Mammary epithelial cell (primary cell): ENCODE measurements at regions of chr18 and their contacts with region 1.

Region 1: GRCh38 chr18:75478996-75479880 is 51.7 kb upstream of the SMIM21 start:
- DNase-seq: peak; percentile 40
- H3K4me3 ChIP-seq: no peak overlapping the region
- H3K27ac ChIP-seq: no peak overlapping the region
- H3K4me1 ChIP-seq: peaks cover 5% of the 10 kb centered on the region
- H3K27me3 ChIP-seq: no peaks in the 10 kb centered on the region
- CTCF ChIP-seq: peak; percentile 47 to 65

Region 2: DNA sequence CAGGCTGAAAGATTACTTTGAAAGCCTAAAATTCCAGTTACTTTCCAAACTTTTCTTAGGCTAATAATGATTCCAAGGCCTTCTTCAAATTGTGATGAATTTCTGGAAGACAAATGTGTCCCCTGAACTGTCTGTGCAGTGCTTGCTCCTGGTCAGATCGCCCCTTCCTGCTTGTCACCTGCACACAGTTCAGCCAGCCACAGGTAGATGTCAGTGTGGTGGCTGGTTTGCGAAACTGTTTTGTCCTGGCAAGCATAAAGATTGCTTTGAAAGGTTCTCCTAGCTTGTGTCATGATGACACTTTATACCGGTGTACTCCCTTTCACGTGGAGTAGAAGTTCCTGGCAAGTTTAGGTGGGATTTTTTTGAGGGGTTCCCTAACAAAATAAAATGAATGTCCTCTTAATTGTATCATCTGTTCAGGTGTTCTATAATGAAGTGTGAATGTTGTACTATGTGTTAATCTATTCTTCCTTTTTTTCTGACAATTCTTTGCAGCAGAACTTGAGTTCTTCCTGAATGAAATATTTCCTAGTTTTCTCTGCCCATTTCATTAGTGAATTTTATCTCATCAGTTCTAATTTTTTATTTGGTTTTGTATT is 582.7 kb before region 1 on chr18:
- CTCF ChIA-PET with region 1: no interaction called
- dilution Hi-C with region 1: no loop called
- in situ Hi-C with region 1: no loop called
- intact Hi-C with region 1: loop called (anchors 1 kb)
- DNase-seq: peak; percentile 62
- H3K4me3 ChIP-seq: no peak overlapping the region
- H3K27ac ChIP-seq: no peak overlapping the region
- H3K4me1 ChIP-seq: peaks cover 6% of the 10 kb centered on the region
- H3K27me3 ChIP-seq: no peaks in the 10 kb centered on the region
- CTCF ChIP-seq: peak; percentile 83 to 89

Region 3: DNA sequence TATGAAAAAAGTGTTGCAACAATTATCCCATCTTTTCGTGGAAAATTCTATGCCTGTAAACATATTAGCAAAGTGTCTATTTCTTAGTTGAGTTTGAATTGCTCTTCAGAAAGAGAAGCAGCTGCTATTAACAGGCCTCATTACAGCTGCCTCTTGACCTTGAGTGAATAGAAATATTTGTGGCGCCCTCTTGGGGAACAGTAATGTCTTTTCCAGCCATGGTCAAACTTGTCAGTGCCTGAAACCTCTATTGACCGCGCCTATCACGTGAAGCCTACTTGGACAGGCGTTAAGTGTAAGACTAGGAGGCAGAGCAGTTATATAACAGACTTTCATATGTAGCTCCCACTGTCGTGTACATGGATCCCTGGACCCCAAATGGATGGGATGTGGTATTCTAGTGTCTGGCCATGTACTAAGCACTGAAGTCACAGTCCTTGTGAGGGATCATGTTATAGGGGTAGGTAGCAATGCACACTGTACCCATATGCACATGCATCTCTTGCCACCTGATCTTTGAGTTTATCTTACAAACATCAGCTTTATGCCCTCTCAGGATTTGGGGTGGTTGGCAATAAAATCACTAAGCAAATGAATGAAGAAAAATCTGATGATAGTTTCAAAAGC is 515.3 kb before region 1 on chr18:
- CTCF ChIA-PET with region 1: no interaction called
- dilution Hi-C with region 1: no loop called
- in situ Hi-C with region 1: no loop called
- intact Hi-C with region 1: loop called (anchors 5 kb)
- DNase-seq: peak; percentile 31
- H3K4me3 ChIP-seq: no peak overlapping the region
- H3K27ac ChIP-seq: no peak overlapping the region
- H3K4me1 ChIP-seq: no peaks in the 10 kb centered on the region
- H3K27me3 ChIP-seq: no peaks in the 10 kb centered on the region
- CTCF ChIP-seq: peak; percentile 16 to 54

Region 4: DNA sequence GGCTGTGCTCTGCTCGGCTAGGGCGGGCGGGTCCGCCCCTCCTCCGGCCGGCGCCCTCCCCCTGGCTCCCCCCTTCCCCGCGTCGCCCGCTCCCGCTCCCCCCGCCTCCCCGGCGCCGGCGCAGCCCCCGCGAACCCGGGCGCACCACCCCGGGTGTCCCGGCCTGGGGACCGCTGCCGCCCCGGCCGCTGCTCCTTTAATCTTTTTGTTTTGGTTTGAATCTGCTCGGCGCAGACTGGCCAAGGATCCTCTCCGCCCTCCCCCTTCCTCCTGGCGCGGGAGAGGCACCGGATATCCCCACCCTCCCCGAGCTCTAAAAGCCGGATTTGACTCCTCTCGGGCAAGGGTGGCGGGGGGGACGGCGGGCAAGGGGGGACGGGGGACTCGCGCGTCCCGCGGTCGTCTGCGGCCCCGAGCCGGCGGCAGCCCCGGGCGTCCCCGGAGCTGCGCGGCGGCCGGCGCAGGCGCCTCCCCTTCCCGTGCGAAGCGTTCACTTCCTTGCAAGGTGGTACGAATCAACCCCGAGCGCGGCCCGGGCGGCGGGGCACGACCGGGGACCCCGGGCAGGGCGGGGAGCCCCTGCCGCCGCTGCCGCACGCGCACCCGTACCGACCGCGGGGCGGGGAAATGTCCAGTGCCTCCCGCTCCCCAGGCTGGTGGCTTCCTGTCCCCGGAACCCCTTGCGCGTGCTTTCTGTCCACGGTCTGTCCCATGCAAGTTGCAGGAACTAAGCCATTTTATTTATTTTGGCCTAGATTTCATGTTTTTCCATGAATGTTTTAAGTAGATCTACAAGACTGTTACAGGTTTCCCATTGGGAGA is 269.9 kb before region 1 on chr18 and contains the start of gene PTGR3:
- CTCF ChIA-PET with region 1: interaction called, 18 read pairs
- dilution Hi-C with region 1: no loop called
- in situ Hi-C with region 1: loop called in 1 of 2 experiments (anchors 25 kb)
- intact Hi-C with region 1: loop called (anchors 2 kb)
- DNase-seq: peak; percentile 81
- H3K4me3 ChIP-seq: peak within 1 kb of the TSS; percentile 79 to 98 (median 88)
- H3K27ac ChIP-seq: peak within 1 kb of the TSS; percentile 74
- H3K4me1 ChIP-seq: peaks cover 36% of the 10 kb centered on the region
- H3K27me3 ChIP-seq: no peaks in the 10 kb centered on the region
- CTCF ChIP-seq: no peak
- total RNA-seq, gene PTGR3: 15.2 to 29.4 TPM

Region 5: DNA sequence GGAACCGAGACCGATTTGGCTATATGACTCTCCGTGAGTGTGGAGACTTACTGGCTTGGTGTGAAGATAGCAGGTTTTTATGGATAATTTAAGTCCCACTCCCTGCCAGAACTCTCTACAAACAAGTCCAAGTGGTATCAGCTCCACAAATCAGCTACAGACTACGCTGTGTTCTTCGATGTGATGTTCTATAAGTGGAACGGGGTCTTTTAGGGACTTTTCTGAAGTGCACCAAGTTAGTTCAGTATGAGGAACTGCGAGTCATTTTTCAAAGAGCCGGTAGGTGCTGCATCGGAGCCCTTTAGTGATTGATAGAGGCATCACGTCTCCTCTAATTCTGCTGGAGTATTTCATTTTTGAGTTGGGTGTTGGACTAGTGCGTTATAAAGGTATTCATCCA is 161.5 kb before region 1 on chr18:
- CTCF ChIA-PET with region 1: no interaction called
- dilution Hi-C with region 1: no loop called
- in situ Hi-C with region 1: no loop called
- intact Hi-C with region 1: loop called (anchors 5 kb)
- DNase-seq: no peak
- H3K4me3 ChIP-seq: no peak overlapping the region
- H3K27ac ChIP-seq: no peak overlapping the region
- H3K4me1 ChIP-seq: no peaks in the 10 kb centered on the region
- H3K27me3 ChIP-seq: peaks cover 2% of the 10 kb centered on the region
- CTCF ChIP-seq: no peak

Region 6: GRCh38 chr18:75376004-75376403 is 103.2 kb before region 1 on chr18:
- CTCF ChIA-PET with region 1: no interaction called
- dilution Hi-C with region 1: loop called (anchors 5 kb)
- in situ Hi-C with region 1: no loop called
- intact Hi-C with region 1: no loop called
- DNase-seq: no peak
- H3K4me3 ChIP-seq: no peak overlapping the region
- H3K27ac ChIP-seq: no peak overlapping the region
- H3K4me1 ChIP-seq: no peaks in the 10 kb centered on the region
- H3K27me3 ChIP-seq: peaks cover 1% of the 10 kb centered on the region
- CTCF ChIP-seq: no peak

Region 7: DNA sequence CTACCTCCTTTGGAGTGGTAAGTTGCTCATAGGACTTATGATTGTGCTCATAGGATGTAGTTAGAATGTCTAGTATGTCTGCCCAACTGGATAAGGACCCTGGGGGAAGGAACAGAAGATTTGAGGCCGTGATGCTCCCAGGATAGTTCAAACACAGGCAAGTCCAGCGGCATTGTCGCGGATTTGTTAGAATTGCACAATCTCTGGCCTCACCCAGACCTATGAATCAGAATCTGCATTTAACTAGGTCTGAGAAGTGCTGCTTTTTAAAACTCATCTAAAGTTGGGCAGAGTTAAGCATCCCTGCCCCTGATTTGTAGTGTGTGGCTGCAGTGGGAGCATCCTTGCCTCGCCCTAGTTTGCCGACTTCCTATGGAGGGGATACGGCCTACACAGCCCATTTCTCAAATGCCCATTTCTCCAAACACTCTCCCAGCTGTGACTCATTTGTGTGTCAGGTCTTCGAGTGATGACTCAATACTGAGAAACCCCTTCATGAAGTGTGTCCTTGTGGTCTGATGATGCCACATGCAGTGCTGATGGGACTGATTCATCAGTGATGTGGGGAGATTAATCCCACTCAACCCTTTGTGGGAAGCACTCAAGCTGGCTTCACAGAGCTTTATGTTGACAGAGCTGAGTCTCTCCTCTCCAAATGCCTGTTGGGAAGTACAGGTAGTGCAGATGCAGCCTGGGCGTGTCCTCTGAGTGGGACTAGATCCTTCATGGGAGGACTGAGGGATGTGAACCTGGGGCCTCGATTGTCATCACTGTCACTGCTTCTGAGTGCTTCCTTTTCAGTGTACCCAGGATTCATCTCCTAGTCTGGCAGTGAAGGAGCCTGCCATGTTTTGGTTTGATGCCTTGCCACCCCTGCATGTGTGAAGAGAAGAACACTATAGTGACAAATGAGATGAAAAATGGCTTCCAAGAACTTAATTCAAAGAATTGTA is 70.4 kb before region 1 on chr18:
- CTCF ChIA-PET with region 1: no interaction called
- dilution Hi-C with region 1: no loop called
- in situ Hi-C with region 1: no loop called
- intact Hi-C with region 1: loop called (anchors 5 kb)
- DNase-seq: peak; percentile 100
- H3K4me3 ChIP-seq: no peak overlapping the region
- H3K27ac ChIP-seq: peak overlapping the region; percentile 76
- H3K4me1 ChIP-seq: peaks cover 29% of the 10 kb centered on the region
- H3K27me3 ChIP-seq: no peaks in the 10 kb centered on the region
- CTCF ChIP-seq: no peak